ENCODE measurements at regions of chr12 and their contacts with region 1.

Region 1: GRCh38 chr12:30251546-30251945 is 444.1 kb downstream of the IPO8 start:
- DNase-seq: no peak
- ATAC-seq: no peak
- H3K4me3 Mint-ChIP-seq: no peak overlapping the region
- H3K27ac Mint-ChIP-seq: no peak overlapping the region
- H3K4me1 Mint-ChIP-seq: no peaks in the 10 kb centered on the region
- H3K27me3 Mint-ChIP-seq: no peaks in the 10 kb centered on the region
- CTCF ChIP-seq: no peak

Region 2: GRCh38 chr12:30286345-30286926 is 34.9 kb after region 1 on chr12:
- CTCF ChIA-PET with region 1: no interaction called
- POLR2A ChIA-PET with region 1: no interaction called
- intact Hi-C with region 1: no loop called
- DNase-seq: no peak
- ATAC-seq: no peak
- H3K4me3 Mint-ChIP-seq: no peak overlapping the region
- H3K27ac Mint-ChIP-seq: no peak overlapping the region
- H3K4me1 Mint-ChIP-seq: no peaks in the 10 kb centered on the region
- H3K27me3 Mint-ChIP-seq: no peaks in the 10 kb centered on the region
- CTCF ChIP-seq: no peak

Region 3: GRCh38 chr12:30345744-30346471 is 94.4 kb after region 1 on chr12:
- CTCF ChIA-PET with region 1: no interaction called
- POLR2A ChIA-PET with region 1: no interaction called
- intact Hi-C with region 1: loop called (anchors 1 kb)
- DNase-seq: no peak
- ATAC-seq: no peak
- H3K4me3 Mint-ChIP-seq: no peak overlapping the region
- H3K27ac Mint-ChIP-seq: no peak overlapping the region
- H3K4me1 Mint-ChIP-seq: no peaks in the 10 kb centered on the region
- H3K27me3 Mint-ChIP-seq: no peaks in the 10 kb centered on the region
- CTCF ChIP-seq: no peak

Measured in activated B cell treated with CpG ODN at 0.5 μM for 24 hours (primary cell).